ENCODE measurements at regions of chr4 and their contacts with region 1.

Region 1: GRCh38 chr4:7042697-7043464 is at the start of gene TADA2B:
- H3K4me3 Mint-ChIP-seq: peak within 1 kb of the TSS; percentile 82
- H3K27ac Mint-ChIP-seq: peak within 1 kb of the TSS; percentile 82
- H3K4me1 Mint-ChIP-seq: peaks cover 57% of the 10 kb centered on the region
- H3K27me3 Mint-ChIP-seq: no peaks in the 10 kb centered on the region

Region 2: DNA sequence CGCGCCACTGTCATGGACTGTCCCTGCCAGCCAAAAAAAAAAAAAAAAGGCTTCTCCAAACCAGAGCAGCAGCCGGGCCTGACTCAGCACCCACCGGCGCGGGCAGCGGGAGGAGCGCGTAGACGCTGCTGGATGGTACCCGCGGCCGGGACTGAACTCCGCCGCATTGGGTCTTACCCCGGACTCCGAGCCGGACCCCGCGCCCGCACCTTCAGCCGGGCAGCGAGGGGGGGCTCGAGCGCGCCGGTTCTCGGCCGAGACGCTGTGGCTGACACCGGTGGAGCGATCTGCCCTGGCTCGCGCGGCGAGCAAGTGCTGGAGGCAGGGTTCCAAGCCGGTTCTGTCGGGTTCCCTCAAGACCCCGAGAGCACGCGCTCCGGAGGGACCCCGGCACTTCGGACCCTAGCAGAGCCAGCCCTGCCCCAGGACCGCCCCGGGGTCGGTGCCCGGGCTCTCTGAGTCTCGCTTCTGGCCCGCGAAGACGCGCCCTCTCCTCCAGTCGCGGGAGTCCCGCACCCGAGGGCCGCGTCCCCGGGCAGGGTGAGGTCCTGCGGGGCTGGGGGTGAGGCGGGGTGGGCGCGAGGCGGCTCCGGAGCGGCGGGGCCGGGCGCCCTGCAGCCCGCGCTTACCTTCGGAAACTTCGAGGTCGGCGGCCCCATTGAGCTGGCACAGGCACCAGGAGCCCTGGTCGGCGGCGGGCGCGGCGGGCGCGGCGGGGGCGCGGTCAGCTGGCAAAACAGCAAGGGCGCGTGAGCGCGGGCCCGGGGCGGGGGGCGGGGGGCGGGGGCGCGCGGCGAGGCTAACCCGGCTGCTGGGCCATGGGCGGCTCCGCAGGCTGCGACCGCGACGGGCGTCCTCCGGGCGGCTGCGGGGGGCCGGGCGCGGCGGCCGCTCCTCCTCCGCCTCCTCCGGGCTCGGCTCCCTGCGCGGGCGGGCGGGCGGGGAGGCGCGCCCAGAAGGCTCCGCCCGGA is 479.7 kb before region 1 on chr4:
- intact Hi-C with region 1: no loop called
- H3K4me3 Mint-ChIP-seq: no peak overlapping the region
- H3K27ac Mint-ChIP-seq: no peak overlapping the region
- H3K4me1 Mint-ChIP-seq: peaks cover 6% of the 10 kb centered on the region
- H3K27me3 Mint-ChIP-seq: peaks cover 75% of the 10 kb centered on the region

Region 3: DNA sequence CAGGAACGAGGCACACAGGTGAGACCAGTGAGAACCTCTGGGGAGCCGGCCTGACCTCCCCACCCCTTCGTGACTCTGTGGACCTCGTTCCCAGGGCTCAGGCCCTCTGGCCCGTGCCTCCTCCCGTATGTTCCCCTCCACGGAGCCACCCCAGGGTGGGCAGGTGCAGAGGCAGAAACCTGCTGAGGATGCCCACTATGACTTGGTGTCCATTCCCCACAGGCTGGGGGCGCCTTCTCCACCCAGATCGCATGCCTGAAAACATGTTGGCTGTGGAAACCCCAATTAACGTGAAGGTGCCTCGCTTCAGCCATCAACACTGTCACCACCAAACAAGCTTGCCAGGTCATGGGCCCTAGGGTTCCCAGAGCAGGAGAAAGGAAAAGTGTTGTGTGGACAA is 299.9 kb before region 1 on chr4:
- intact Hi-C with region 1: no loop called
- H3K4me3 Mint-ChIP-seq: no peak overlapping the region
- H3K27ac Mint-ChIP-seq: no peak overlapping the region
- H3K4me1 Mint-ChIP-seq: peaks cover 20% of the 10 kb centered on the region
- H3K27me3 Mint-ChIP-seq: peaks cover 23% of the 10 kb centered on the region

Region 4: DNA sequence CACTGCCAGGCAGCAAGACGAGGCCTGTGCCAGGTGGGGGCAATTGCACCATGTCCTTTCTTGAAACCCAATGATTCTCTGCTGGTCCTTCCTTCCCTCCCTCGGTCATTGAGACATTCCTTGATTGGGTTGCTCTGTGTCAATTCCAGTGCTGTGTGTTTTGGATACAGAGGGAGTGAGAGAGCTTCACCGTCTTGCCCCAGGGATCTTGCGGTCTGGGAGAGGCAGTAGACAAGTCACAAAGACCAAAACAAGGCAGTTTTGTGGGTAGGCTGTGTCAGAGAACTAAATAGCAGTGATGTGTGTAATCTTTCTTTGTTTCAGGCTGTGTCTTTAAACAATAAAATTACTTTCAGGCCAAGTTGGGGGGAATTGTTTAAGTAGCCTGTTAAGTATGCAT is 38.5 kb before region 1 on chr4:
- intact Hi-C with region 1: no loop called
- H3K4me3 Mint-ChIP-seq: no peak overlapping the region
- H3K27ac Mint-ChIP-seq: no peak overlapping the region
- H3K4me1 Mint-ChIP-seq: peaks cover 5% of the 10 kb centered on the region
- H3K27me3 Mint-ChIP-seq: no peaks in the 10 kb centered on the region

Region 5: GRCh38 chr4:7101692-7102515 is 59.0 kb after region 1 on chr4:
- intact Hi-C with region 1: loop called (anchors 2 kb)
- H3K4me3 Mint-ChIP-seq: peak overlapping the region; percentile 94
- H3K27ac Mint-ChIP-seq: no peak overlapping the region
- H3K4me1 Mint-ChIP-seq: peaks cover 31% of the 10 kb centered on the region
- H3K27me3 Mint-ChIP-seq: peaks cover 31% of the 10 kb centered on the region